Dorsolateral prefrontal cortex (tissue), 120 donors: ENCODE measurements at regions of chr6 and their contacts with region 1.

Region 1: GRCh38 chr6:163132050-163132750 is 282.3 kb upstream of the QKI start:
- DNase-seq: no peak
- H3K4me3 ChIP-seq: no peak overlapping the region
- H3K27ac ChIP-seq: no peak overlapping the region
- H3K27me3 ChIP-seq: no peaks in the 10 kb centered on the region
- CTCF ChIP-seq: no peak

Region 2: DNA sequence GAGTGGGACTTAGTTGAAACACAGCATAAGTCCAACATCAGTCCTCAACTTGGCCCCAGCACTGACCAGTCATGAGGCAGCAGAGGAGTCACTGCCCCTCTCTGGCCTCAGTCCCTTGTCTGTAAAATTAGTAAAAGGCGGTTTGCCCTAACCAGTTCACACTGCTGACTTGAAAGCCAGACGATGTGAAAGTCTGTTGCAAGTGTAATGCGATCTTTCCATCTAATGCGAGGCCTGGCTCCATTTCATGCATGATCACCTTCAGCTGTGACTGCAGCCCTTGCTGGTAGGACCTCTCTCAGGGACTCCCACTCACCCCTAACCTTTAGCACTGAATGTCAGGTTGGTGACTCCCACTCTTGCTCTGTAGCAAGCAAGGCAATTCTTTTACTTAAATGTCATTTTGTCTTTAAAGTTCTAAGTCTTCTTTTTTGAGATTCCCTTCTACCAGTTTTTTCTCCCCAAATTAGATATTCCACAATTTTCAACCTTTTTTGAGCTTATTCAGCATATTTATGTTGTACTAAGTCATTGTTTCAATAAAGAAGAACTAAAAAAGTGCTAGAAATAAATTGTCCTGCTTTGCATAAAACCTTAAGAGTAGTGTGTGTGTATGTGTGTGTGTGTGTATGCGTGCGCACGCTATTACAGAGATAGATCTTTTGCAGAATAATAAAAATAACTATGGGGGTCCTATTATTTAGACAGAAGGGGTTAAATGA is 158.9 kb before region 1 on chr6:
- intact Hi-C with region 1: loop called in 1 of 2 experiments (anchors 10 kb)
- DNase-seq: no peak
- H3K4me3 ChIP-seq: peak overlapping the region in 23 of 59 donors; percentile 10 to 58 (median 31)
- H3K27ac ChIP-seq: peak overlapping the region in 6 of 59 donors; percentile 2 to 47 (median 8)
- H3K27me3 ChIP-seq: no peaks in the 10 kb centered on the region
- CTCF ChIP-seq: no peak

Region 3: DNA sequence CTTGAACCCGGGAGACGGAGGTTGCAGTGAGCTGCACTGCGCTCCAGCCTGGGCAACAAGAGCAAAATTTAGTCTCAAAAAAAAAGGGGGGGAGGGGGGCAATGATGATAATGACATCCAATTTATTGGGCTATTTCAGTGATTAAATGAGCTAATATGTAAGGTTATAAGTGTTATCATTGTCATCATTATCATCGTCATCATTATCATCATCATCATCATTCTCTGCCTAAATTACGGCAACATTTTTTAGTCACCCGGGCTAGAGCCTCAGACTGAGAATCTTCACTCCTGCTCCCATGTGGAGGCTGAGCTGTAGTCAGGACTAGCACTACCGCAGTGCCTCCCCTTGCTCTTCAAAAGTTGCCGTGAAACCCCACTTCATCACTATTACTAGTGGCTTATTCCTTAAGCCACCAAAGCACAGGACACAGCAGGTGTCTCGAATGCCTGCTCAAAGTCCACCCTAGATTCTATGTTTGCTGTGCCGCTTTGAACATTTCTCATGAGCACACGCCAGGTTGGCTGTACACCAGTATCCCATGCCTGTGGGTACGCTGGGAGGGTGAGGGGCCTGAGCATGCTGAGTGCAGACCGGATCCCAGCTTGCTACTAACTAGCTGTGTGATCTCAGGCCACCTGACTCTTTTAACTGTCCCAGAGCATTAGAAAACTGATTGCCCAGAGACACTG is 53.6 kb before region 1 on chr6:
- intact Hi-C with region 1: no loop called
- DNase-seq: no peak
- H3K4me3 ChIP-seq: no peak overlapping the region
- H3K27ac ChIP-seq: no peak overlapping the region
- H3K27me3 ChIP-seq: no peaks in the 10 kb centered on the region
- CTCF ChIP-seq: no peak